ENCODE measurements at regions of chr12 and their contacts with region 1.

Region 1: DNA sequence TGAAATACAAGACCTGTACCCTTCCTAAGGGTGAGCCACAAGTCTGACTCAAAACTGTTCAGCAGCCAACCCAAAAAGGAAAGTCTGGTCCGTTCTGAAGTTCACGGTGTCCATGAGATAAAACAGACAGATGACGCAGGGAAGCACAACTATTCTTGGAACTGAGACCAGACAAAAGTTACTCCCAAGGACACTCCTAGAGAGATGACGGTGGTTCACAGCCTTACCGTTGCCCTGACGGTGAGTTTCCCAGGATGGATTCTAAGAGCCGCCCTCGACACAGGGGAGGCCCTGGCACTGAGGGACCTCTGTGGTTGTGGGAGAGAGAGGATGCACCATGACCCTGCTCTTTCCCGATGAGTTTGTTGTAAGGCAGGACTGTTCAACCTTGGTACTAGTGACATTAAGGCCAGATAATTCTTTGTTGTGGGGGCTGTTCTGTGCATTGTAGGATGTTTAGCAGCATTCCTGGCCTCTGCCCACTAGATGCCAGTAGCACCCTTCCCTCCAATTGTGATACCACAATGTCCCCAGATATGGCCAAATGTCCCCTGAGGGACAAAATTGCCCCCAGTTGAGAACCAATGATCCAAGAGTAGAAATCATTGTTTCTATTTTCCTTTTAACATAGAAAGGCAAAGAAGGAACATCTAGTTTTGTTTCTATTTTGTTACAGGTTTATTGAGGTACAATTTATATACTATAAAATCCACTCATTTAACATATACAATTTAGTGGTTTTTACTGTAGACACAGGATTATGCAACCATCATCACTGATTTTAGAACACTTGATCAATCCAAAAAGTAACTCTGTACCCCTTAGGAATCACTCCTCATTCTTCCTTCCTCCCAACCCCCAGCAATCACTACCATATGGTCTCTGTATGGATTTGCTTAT is 23.0 kb downstream of the OR10P1 start:
- DNase-seq: peak; percentile 29
- H3K4me3 Mint-ChIP-seq: no peak overlapping the region
- H3K27ac Mint-ChIP-seq: no peak overlapping the region
- H3K4me1 Mint-ChIP-seq: no peaks in the 10 kb centered on the region
- H3K27me3 Mint-ChIP-seq: no peaks in the 10 kb centered on the region

Region 2: GRCh38 chr12:55043542-55043941 is 616.2 kb before region 1 on chr12:
- CTCF ChIA-PET with region 1: no interaction called
- intact Hi-C with region 1: no loop called
- DNase-seq: no peak
- H3K4me3 Mint-ChIP-seq: no peak overlapping the region
- H3K27ac Mint-ChIP-seq: no peak overlapping the region
- H3K4me1 Mint-ChIP-seq: peaks cover 15% of the 10 kb centered on the region
- H3K27me3 Mint-ChIP-seq: no peaks in the 10 kb centered on the region

Region 3: GRCh38 chr12:55188974-55189556 is 470.7 kb before region 1 on chr12:
- CTCF ChIA-PET with region 1: interaction called, 17 read pairs
- intact Hi-C with region 1: loop called (anchors 1 kb)
- DNase-seq: peak; percentile 70
- H3K4me3 Mint-ChIP-seq: no peak overlapping the region
- H3K27ac Mint-ChIP-seq: no peak overlapping the region
- H3K4me1 Mint-ChIP-seq: no peaks in the 10 kb centered on the region
- H3K27me3 Mint-ChIP-seq: peaks cover 22% of the 10 kb centered on the region

Region 4: DNA sequence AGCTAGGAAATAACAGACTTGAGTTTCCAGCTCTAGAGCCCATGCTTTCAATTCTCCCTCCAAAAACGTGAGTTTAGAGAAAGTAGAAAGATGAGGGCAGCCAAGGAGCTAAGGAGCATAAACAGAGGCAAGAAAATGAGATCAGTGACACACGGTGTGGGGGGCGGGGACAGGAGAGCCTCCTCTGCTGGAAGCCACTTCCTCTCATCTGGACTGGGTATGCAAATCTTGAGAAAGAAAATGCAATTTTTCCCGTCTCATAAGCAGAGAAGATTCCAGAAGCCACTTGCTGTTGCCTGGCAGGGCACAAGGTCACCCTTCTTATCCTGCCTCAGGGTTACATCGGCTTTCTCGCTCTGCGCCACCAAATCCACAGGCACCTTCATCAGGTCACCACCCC is 17.1 kb before region 1 on chr12:
- CTCF ChIA-PET with region 1: interaction called, 27 read pairs
- intact Hi-C with region 1: loop called (anchors 1 kb)
- DNase-seq: peak; percentile 67
- H3K4me3 Mint-ChIP-seq: no peak overlapping the region
- H3K27ac Mint-ChIP-seq: no peak overlapping the region
- H3K4me1 Mint-ChIP-seq: peaks cover 25% of the 10 kb centered on the region
- H3K27me3 Mint-ChIP-seq: peaks cover 2% of the 10 kb centered on the region

Region 5: GRCh38 chr12:55681142-55682077 is 21.7 kb after region 1 on chr12:
- CTCF ChIA-PET with region 1: interaction called, 13 read pairs
- intact Hi-C with region 1: no loop called
- DNase-seq: no peak
- H3K4me3 Mint-ChIP-seq: no peak overlapping the region
- H3K27ac Mint-ChIP-seq: no peak overlapping the region
- H3K4me1 Mint-ChIP-seq: peaks cover 6% of the 10 kb centered on the region
- H3K27me3 Mint-ChIP-seq: peaks cover 16% of the 10 kb centered on the region

Region 6: GRCh38 chr12:55707841-55708694 is 48.3 kb after region 1 on chr12 and contains the start of gene ITGA7:
- CTCF ChIA-PET with region 1: interaction called, 11 read pairs
- intact Hi-C with region 1: no loop called
- DNase-seq: peak; percentile 65
- H3K4me3 Mint-ChIP-seq: peak within 1 kb of the TSS; percentile 80
- H3K27ac Mint-ChIP-seq: no peak within 1 kb of the TSS
- H3K4me1 Mint-ChIP-seq: peaks cover 14% of the 10 kb centered on the region
- H3K27me3 Mint-ChIP-seq: peaks cover 25% of the 10 kb centered on the region
- total RNA-seq, gene ITGA7: 3.9 to 4.8 TPM

Region 7: DNA sequence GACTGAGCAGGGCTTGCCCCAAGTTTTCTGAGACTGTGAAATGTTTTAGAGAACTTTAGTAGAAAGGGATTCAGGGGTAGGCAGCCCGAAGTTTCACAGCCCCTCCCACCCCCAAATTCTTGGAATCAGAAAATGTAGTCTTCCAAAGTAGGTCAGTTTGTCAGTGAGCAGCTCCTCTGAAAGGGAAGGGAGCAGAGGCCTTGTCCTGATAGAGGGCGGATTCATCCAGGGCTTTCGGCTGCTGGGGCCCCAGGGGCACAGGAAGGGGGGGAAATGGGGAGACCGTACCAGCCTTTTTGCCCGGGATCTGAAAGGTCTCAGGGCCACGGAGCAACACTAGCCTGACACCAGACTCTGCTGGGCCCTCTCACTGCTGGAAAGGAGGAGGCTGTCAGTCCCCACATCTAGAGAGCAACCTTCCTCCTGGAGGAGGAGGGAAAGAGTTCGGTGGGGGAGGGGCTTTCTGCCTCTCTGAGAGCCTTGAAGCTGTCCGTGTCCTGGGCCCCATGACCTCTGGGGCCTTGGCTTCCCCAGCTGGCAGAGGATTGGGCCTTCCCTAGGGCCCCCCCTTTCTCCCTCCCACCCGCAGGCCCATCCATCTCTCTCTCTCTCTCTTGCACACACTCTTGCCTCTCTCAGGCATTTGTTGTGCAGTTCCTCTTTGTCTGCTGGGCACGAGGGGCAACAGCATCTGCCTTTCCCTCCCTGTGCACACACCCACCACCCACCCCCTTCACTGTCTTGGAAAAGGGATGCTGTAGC is 360.9 kb after region 1 on chr12 and contains the start of gene IKZF4:
- CTCF ChIA-PET with region 1: no interaction called
- intact Hi-C with region 1: no loop called
- DNase-seq: peak; percentile 44
- H3K4me3 Mint-ChIP-seq: peak within 1 kb of the TSS; percentile 84
- H3K27ac Mint-ChIP-seq: peak within 1 kb of the TSS; percentile 80
- H3K4me1 Mint-ChIP-seq: peaks cover 30% of the 10 kb centered on the region
- H3K27me3 Mint-ChIP-seq: no peaks in the 10 kb centered on the region
- total RNA-seq, gene IKZF4: 7.5 to 8.2 TPM